ENCODE measurements at regions of chr1 and their contacts with region 1.

Region 1: GRCh38 chr1:77281491-77282186 is at the start of gene AK5:
- DNase-seq: peak; percentile 8 to 68 (median 44)
- ATAC-seq: peak; percentile 70 to 79
- H3K4me3 Mint-ChIP-seq: peak within 1 kb of the TSS; percentile 64 to 94 (median 90)
- H3K27ac Mint-ChIP-seq: peak within 1 kb of the TSS; percentile 49 to 91 (median 80)
- H3K4me1 Mint-ChIP-seq: peaks cover 26 to 59% (median 48%) of the 10 kb centered on the region in 4 donors
- H3K27me3 Mint-ChIP-seq: peaks cover 0 to 25% (median 0%) of the 10 kb centered on the region in 5 donors
- polyA plus RNA-seq, gene AK5: 42.9 to 58.9 (median 45.0) TPM

Region 2: GRCh38 chr1:77313491-77313890 is 31.9 kb after region 1 on chr1:
- POLR2A ChIA-PET with region 1: interaction called, 29 read pairs
- DNase-seq: peak in 6 of 10 donors; percentile 8 to 66 (median 24)
- ATAC-seq: peak; percentile 60 to 69
- H3K4me3 Mint-ChIP-seq: peak overlapping the region in 4 of 10 donors; percentile 22 to 63 (median 42)
- H3K27ac Mint-ChIP-seq: peak overlapping the region in 8 of 10 donors; percentile 12 to 84 (median 64)
- H3K4me1 Mint-ChIP-seq: peaks cover 11 to 50% (median 36%) of the 10 kb centered on the region in 4 donors
- H3K27me3 Mint-ChIP-seq: no peaks in the 10 kb centered on the region